SK-N-SH (cell line): ENCODE measurements at regions of chr18 and their contacts with region 1.

Region 1: GRCh38 chr18:67104700-67105284 is 411.7 kb downstream of the DSEL start:
- DNase-seq: peak; percentile 24
- H3K4me3 ChIP-seq: peak overlapping the region in 1 of 2 experiments; percentile 48; a peak in 1 of 4 replicates
- H3K27ac ChIP-seq: no peak overlapping the region
- H3K4me1 ChIP-seq: no peaks in the 10 kb centered on the region
- H3K27me3 ChIP-seq: no peaks in the 10 kb centered on the region
- CTCF ChIP-seq: peak; percentile 90
- EP300 ChIP-seq: no peak
- RAD21 ChIP-seq: peak; percentile 79

Region 2: GRCh38 chr18:67094123-67094522 is 10.7 kb before region 1 on chr18:
- CTCF ChIA-PET with region 1: interaction called, 10 read pairs
- POLR2A ChIA-PET with region 1: no interaction called
- DNase-seq: no peak
- H3K4me3 ChIP-seq: no peak overlapping the region
- H3K27ac ChIP-seq: no peak overlapping the region
- H3K4me1 ChIP-seq: no peaks in the 10 kb centered on the region
- H3K27me3 ChIP-seq: no peaks in the 10 kb centered on the region
- CTCF ChIP-seq: no peak
- EP300 ChIP-seq: no peak
- RAD21 ChIP-seq: no peak

Region 3: GRCh38 chr18:67117804-67118203 is 13.0 kb after region 1 on chr18:
- CTCF ChIA-PET with region 1: interaction called, 13 read pairs
- POLR2A ChIA-PET with region 1: no interaction called
- DNase-seq: no peak
- H3K4me3 ChIP-seq: no peak overlapping the region
- H3K27ac ChIP-seq: no peak overlapping the region
- H3K4me1 ChIP-seq: no peaks in the 10 kb centered on the region; a peak in 1 of 4 replicates
- H3K27me3 ChIP-seq: no peaks in the 10 kb centered on the region
- CTCF ChIP-seq: no peak
- EP300 ChIP-seq: no peak
- RAD21 ChIP-seq: no peak

Region 4: DNA sequence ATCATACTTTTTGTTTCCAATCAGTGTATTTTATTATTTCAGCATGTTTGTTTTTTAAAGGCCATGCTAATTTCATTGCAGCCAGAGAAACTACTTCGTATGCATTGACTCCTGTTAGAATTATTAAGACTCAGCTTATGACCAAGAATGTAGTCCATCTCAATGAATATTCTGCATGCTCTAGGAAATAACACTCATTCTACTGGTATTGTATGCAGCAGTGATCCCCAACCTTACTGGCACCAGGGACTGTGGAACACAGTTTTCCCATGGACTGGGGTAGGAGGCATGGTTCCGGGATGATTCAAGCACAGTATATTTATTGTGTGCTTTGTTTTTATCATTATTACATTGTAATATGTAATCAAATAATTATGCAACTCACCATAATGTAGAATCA is 54.9 kb after region 1 on chr18:
- CTCF ChIA-PET with region 1: interaction called, 15 read pairs
- POLR2A ChIA-PET with region 1: no interaction called
- DNase-seq: no peak
- H3K4me3 ChIP-seq: no peak overlapping the region
- H3K27ac ChIP-seq: no peak overlapping the region
- H3K4me1 ChIP-seq: no peaks in the 10 kb centered on the region
- H3K27me3 ChIP-seq: no peaks in the 10 kb centered on the region
- CTCF ChIP-seq: no peak
- EP300 ChIP-seq: no peak
- RAD21 ChIP-seq: no peak

Region 5: DNA sequence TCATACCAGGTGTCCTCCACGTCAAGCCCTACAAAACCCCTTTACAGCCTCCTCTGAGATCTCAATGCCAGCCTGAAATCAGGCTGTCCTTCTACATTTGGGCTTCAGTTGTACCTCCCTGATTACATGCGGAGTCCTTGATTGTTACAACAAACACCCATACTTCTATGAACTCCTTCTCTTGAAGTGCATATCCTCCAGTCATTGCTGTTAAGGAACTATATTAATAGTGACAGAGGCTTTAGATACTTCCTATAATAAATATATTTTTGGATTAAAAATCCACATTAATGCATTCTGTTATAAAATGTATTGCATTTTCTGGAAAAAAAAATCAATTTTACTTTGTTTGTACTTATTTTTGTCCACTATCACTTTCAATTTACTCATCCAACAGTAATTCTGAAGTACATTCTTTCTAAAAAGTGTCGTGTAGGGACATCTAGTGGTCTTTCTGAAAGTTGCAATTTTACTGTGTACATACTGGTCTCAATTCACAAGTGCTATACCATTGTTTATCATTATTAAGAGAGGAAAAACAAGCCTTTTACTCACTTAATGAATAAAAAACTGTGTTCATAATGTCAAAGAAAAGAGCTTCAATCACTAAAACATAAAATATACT is 95.3 kb after region 1 on chr18:
- CTCF ChIA-PET with region 1: interaction called, 63 read pairs
- POLR2A ChIA-PET with region 1: no interaction called
- DNase-seq: peak; percentile 32
- H3K4me3 ChIP-seq: no peak overlapping the region; a peak in 1 of 4 replicates
- H3K27ac ChIP-seq: no peak overlapping the region
- H3K4me1 ChIP-seq: no peaks in the 10 kb centered on the region
- H3K27me3 ChIP-seq: 0 out of 2 replicates have a peak, but pooled peaks cover 7% of the 10 kb centered on the region
- CTCF ChIP-seq: peak; percentile 76
- EP300 ChIP-seq: no peak
- RAD21 ChIP-seq: peak; percentile 89